Endothelial cell of umbilical vein (primary cell): ENCODE measurements at regions of chr3 and their contacts with region 1.

Region 1: DNA sequence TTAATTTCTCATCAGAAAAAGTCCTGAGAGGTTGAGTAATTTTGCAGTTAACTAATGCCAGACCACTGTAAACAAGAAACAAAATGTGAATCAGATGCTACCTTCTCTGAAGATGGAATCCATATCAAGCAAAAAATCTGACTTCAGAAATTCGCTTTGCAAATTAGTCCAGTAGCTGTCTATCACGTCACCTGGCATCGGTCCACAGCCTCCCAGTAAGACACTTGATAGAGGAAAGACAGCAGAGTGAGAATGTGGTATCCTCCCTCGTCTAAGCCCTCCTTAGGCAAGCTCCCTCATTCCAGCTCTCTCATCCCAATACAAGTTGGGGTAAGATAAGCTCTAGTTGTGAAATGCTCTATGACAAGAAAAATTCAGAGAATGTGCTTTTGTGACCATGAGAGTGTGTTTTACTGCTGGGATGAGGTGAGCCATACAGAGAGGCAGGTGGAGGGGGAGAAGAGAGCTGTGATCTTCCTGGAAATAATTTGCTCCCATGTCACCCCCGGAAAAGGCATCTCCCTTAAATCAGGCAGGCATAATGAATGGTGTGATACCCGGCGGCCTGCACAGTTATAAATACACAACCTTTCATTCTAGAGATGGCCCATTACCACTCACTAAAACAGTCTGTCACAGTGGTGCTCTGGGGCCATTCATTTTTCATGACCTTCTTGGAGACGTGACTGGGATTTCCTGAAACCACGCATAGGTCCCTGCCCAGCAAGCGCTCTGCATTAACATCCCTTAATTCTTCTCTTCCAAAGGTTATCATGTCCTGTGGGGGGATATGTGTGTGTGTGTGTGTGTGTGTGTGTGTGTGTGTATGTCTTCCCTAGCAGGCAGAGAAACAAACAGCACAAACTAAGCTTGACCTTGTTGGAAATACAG is 602.0 kb upstream of the KCNMB2 start:
- DNase-seq: peak; percentile 12
- H3K4me3 ChIP-seq: no peak overlapping the region
- H3K27ac ChIP-seq: no peak overlapping the region
- H3K4me1 ChIP-seq: peaks cover 21% of the 10 kb centered on the region
- H3K27me3 ChIP-seq: no peaks in the 10 kb centered on the region
- CTCF ChIP-seq: no peak
- POLR2A ChIP-seq: no peak

Region 2: DNA sequence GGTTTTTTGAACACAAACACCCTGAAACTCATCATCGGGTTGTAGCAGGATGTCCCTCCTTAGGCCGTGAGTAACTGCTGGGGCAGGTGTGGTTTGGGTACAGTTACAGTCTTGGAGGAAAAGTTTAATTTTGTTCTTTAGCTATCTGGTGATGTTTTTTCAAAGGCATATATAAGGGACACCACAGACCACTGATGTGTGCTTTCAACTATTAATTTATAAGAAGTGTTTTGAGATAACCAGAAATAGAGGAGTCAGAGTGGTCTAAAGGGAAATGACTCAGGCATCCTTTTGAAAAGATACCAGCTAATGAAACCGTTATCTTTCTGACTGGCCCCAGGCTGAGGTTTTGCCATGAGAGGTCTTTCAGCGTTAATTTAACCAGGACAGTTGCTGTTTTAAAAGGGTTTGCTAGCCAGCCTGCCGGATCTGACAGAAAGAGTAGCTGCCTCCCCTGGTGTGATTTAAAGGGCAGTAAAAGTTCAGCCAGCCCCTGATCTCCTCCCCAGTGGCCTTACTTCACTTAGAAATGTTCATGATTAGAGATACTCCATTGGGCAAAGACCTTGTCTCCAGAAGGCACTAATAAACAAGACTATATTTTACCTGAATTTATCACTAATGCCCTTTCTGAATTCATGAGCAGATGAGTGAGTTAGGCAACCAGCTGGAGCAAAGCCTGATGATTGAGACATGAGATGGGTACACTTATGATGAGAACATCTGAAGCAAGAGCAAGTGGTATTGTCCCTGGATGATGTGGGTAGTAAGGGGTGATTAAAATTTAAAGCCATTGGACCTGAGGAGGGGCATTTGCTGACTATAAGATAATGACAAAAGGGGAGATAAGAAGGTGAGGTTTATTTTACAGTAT is 254.4 kb before region 1 on chr3:
- CTCF ChIA-PET with region 1: no interaction called
- POLR2A ChIA-PET with region 1: no interaction called
- dilution Hi-C with region 1: no loop called
- intact Hi-C with region 1: loop called (anchors 2 kb)
- DNase-seq: peak; percentile 76
- H3K4me3 ChIP-seq: no peak overlapping the region
- H3K27ac ChIP-seq: peak overlapping the region; percentile 72
- H3K4me1 ChIP-seq: peaks cover 45% of the 10 kb centered on the region
- H3K27me3 ChIP-seq: no peaks in the 10 kb centered on the region
- CTCF ChIP-seq: no peak
- POLR2A ChIP-seq: no peak

Region 3: DNA sequence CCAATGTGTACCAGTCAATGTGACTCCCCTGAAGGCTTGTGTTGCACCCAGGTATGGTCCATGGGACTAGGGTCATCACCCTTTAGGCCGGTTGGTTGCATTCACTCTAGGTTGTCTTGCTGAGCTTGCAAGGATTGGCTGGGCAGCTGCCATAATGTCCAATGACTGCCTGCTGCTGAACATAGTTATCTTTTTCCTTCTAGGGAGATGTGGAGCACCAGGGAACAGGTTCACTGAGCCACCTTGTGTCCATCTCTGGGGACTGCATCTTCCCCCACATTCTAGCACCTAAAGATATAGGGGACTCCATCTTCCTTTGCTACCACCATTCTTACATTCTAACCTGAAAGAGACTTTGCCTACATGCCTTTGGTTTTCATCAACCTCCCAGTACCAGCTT is 156.5 kb before region 1 on chr3:
- CTCF ChIA-PET with region 1: no interaction called
- POLR2A ChIA-PET with region 1: no interaction called
- dilution Hi-C with region 1: no loop called
- intact Hi-C with region 1: loop called (anchors 2 kb)
- DNase-seq: peak; percentile 41
- H3K4me3 ChIP-seq: no peak overlapping the region
- H3K27ac ChIP-seq: no peak overlapping the region
- H3K4me1 ChIP-seq: peaks cover 13% of the 10 kb centered on the region
- H3K27me3 ChIP-seq: no peaks in the 10 kb centered on the region
- CTCF ChIP-seq: peak; percentile 52 to 57
- POLR2A ChIP-seq: no peak

Region 4: GRCh38 chr3:177816667-177817208 is 117.5 kb before region 1 on chr3:
- CTCF ChIA-PET with region 1: no interaction called
- POLR2A ChIA-PET with region 1: no interaction called
- dilution Hi-C with region 1: no loop called
- intact Hi-C with region 1: loop called (anchors 5 kb)
- DNase-seq: peak; percentile 62
- H3K4me3 ChIP-seq: no peak overlapping the region
- H3K27ac ChIP-seq: no peak overlapping the region
- H3K4me1 ChIP-seq: peaks cover 18% of the 10 kb centered on the region
- H3K27me3 ChIP-seq: no peaks in the 10 kb centered on the region
- CTCF ChIP-seq: no peak
- POLR2A ChIP-seq: no peak

Region 5: GRCh38 chr3:178084938-178085816 is 150.9 kb after region 1 on chr3:
- CTCF ChIA-PET with region 1: no interaction called
- POLR2A ChIA-PET with region 1: no interaction called
- dilution Hi-C with region 1: no loop called
- intact Hi-C with region 1: loop called (anchors 1 kb)
- DNase-seq: peak; percentile 86
- H3K4me3 ChIP-seq: no peak overlapping the region
- H3K27ac ChIP-seq: peak overlapping the region; percentile 8
- H3K4me1 ChIP-seq: peaks cover 24% of the 10 kb centered on the region
- H3K27me3 ChIP-seq: no peaks in the 10 kb centered on the region
- CTCF ChIP-seq: no peak
- POLR2A ChIP-seq: no peak

Region 6: DNA sequence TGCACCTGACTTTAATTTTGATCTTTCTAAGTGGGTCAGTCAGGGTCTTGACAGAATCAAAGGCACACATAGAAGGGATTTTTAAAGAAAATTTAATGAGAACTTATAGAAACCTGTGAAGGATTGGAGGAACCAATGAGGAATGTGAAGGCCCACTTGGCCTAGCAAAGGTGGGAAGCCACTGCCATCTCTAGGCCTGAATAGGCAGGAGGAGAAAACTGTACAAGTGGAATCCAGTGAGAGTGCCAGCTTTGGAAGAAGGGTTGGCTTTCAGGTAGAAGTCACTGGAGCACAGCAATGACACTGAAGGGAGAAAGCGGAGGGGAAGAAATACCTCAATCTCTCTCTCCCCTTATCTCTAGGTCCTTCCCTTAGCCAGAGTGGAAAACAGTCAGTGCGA is 221.3 kb after region 1 on chr3:
- CTCF ChIA-PET with region 1: interaction called, 6 read pairs
- POLR2A ChIA-PET with region 1: no interaction called
- dilution Hi-C with region 1: no loop called
- intact Hi-C with region 1: loop called (anchors 1 kb)
- DNase-seq: no peak
- H3K4me3 ChIP-seq: no peak overlapping the region
- H3K27ac ChIP-seq: no peak overlapping the region
- H3K4me1 ChIP-seq: peaks cover 20% of the 10 kb centered on the region
- H3K27me3 ChIP-seq: no peaks in the 10 kb centered on the region
- CTCF ChIP-seq: no peak
- POLR2A ChIP-seq: no peak

Region 7: GRCh38 chr3:178352326-178353005 is 418.2 kb after region 1 on chr3:
- CTCF ChIA-PET with region 1: no interaction called
- POLR2A ChIA-PET with region 1: no interaction called
- dilution Hi-C with region 1: no loop called
- intact Hi-C with region 1: loop called (anchors 1 kb)
- DNase-seq: peak; percentile 90
- H3K4me3 ChIP-seq: no peak overlapping the region
- H3K27ac ChIP-seq: peak overlapping the region; percentile 89
- H3K4me1 ChIP-seq: peaks cover 21% of the 10 kb centered on the region
- H3K27me3 ChIP-seq: no peaks in the 10 kb centered on the region
- CTCF ChIP-seq: no peak
- POLR2A ChIP-seq: no peak